Vagina (tissue), 2 donors: ENCODE measurements at regions of chr14 and their contacts with region 1.

Region 1: GRCh38 chr14:51682411-51682810 is 30.7 kb downstream of the FRMD6 start:
- DNase-seq: no peak
- H3K4me3 ChIP-seq: no peak overlapping the region
- H3K27ac ChIP-seq: no peak overlapping the region
- H3K4me1 ChIP-seq: peaks cover 20% of the 10 kb centered on the region
- H3K27me3 ChIP-seq: no peaks in the 10 kb centered on the region
- CTCF ChIP-seq: no peak
- POLR2A ChIP-seq: no peak

Region 2: DNA sequence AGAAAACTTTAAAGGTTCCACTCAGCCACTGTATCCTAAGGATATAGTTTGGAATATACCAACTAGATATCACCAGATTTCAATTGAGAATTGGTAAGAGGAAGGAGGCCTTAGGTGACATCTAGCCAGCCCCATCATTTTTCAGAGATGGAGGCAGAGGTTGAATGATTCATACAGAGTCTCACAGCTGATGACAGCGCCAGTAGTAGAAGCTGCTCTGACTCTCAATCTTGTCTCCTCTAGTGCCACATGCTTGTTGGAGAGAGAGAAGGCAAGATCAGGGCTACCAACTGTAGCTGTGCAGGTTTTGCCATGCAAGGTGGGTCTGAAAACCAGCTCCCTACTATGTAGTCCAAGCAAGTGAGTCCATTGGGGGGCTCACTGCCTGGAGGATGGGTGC is 24.6 kb before region 1 on chr14:
- intact Hi-C with region 1: loop called (anchors 2 kb)
- DNase-seq: no peak
- H3K4me3 ChIP-seq: no peak overlapping the region
- H3K27ac ChIP-seq: no peak overlapping the region
- H3K4me1 ChIP-seq: peaks cover 70% of the 10 kb centered on the region
- H3K27me3 ChIP-seq: no peaks in the 10 kb centered on the region
- CTCF ChIP-seq: no peak
- POLR2A ChIP-seq: no peak

Region 3: GRCh38 chr14:52439476-52439875 is 757.1 kb after region 1 on chr14:
- intact Hi-C with region 1: no loop called
- DNase-seq: no peak
- H3K4me3 ChIP-seq: no peak overlapping the region
- H3K27ac ChIP-seq: no peak overlapping the region
- H3K4me1 ChIP-seq: no peaks in the 10 kb centered on the region
- H3K27me3 ChIP-seq: no peaks in the 10 kb centered on the region
- CTCF ChIP-seq: no peak
- POLR2A ChIP-seq: no peak